ENCODE measurements at regions of chr6 and their contacts with region 1.

Region 1: DNA sequence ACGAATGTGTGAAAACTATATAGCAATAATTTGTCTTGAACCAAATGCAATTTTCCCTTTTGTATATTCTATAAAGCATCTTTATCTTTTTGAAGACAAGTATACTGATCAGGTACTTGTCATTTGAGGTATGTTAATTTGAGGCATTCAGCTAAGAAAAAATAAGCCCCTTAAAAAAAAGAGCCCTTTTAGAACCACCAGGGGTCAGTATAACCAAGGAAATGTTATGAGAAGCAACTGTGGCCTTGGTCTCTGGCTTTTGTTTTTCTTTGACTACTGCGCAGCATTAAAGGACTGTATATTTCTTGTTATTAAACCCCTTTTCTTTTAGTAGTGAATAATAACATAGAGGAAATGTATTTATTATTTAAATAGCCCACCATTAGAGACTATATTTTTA is 43.1 kb downstream of the CD109 start:
- DNase-seq: no peak
- H3K4me3 Mint-ChIP-seq: no peak overlapping the region
- H3K27ac Mint-ChIP-seq: no peak overlapping the region
- H3K4me1 Mint-ChIP-seq: no peaks in the 10 kb centered on the region
- H3K27me3 Mint-ChIP-seq: no peaks in the 10 kb centered on the region

Region 2: GRCh38 chr6:73675466-73676098 is 63.5 kb before region 1 on chr6:
- CTCF ChIA-PET with region 1: interaction called, 185 read pairs
- intact Hi-C with region 1: no loop called
- DNase-seq: peak; percentile 87
- H3K4me3 Mint-ChIP-seq: no peak overlapping the region
- H3K27ac Mint-ChIP-seq: no peak overlapping the region
- H3K4me1 Mint-ChIP-seq: no peaks in the 10 kb centered on the region
- H3K27me3 Mint-ChIP-seq: peaks cover 8% of the 10 kb centered on the region

Region 3: GRCh38 chr6:73768558-73768957 is 29.5 kb after region 1 on chr6:
- CTCF ChIA-PET with region 1: interaction called, 16 read pairs
- intact Hi-C with region 1: no loop called
- DNase-seq: no peak
- H3K4me3 Mint-ChIP-seq: no peak overlapping the region
- H3K27ac Mint-ChIP-seq: no peak overlapping the region
- H3K4me1 Mint-ChIP-seq: no peaks in the 10 kb centered on the region
- H3K27me3 Mint-ChIP-seq: no peaks in the 10 kb centered on the region

Region 4: DNA sequence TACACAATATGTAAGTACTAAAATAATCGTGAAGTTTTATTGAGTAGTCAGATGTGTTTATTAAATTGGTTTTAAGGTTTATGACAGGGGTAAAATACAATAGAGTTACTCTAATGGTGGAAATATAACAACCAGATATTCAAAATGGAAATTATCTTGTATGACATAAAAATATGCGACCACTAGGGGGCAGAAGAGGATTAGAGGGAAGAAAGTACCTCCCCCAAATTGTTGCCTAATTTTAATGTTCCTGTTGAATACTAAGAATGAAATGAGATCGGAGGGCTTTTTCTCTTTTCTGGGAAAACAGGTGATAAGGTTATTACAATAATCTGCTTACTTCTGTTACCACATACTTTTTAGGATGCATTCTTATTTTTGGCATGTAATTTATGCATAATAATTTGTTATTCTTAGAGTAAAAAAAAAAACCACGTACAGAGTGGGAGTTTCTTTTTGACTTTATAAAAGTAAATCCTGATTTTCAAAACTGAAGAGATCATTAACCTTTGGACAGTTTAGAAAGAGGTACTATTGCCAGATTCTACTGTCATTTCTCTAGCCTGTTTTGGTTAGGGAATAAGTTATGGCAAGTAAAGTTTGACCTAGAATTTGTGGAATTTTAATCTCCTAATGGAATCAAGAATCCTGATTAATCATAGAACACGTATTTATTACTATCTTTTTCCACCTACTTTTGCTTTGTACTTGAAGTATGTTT is 116.1 kb after region 1 on chr6:
- CTCF ChIA-PET with region 1: interaction called, 4 read pairs
- intact Hi-C with region 1: loop called (anchors 1 kb)
- DNase-seq: peak; percentile 6
- H3K4me3 Mint-ChIP-seq: no peak overlapping the region
- H3K27ac Mint-ChIP-seq: no peak overlapping the region
- H3K4me1 Mint-ChIP-seq: no peaks in the 10 kb centered on the region
- H3K27me3 Mint-ChIP-seq: no peaks in the 10 kb centered on the region

Region 5: DNA sequence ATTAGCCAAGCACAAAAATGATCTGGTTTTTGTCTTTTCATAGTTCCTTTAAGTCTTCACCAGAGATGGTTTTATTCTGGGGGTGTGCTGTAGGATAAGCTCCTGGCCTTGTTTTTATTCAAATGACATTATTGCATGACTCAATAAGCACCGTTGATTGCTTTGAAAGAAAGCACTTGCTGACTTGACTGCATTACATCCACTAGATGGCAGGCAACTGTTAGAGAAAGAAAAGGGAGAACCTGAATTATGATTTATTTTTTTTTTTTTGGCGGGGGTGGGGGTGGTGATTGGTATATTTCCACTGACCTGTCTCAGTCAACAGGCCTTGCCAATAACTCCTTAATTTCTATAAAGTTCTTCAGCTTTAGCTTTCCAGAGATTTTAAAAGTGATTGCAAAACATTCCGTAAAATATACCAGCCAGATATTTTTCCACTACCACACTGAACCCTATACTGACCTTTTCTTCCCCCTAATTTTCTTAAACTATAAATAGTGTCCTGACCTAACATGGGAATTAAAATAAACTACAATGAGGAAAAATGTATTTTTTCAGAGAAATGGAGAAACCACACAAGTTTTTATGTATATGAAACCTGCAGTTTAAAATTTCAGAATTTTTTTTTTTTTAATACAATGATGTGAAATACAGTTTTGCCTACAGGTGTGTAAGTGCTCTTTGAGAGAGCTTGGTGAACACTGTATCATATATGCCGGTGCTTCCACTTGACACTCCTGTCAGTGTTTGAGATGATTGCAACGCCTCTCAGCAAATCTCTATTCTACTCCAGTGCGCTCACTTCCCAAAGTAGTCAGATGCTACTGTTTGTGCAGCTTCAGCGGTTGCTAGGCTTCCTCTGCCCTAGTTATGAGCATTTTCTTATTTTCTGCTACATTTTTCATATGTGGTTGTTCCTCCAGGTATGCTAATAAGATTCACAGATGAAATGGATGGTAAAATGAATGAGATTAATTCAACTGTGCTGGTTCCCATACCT is 231.2 kb after region 1 on chr6:
- CTCF ChIA-PET with region 1: no interaction called
- intact Hi-C with region 1: loop called (anchors 1 kb)
- DNase-seq: peak; percentile 9
- H3K4me3 Mint-ChIP-seq: no peak overlapping the region
- H3K27ac Mint-ChIP-seq: no peak overlapping the region
- H3K4me1 Mint-ChIP-seq: no peaks in the 10 kb centered on the region
- H3K27me3 Mint-ChIP-seq: no peaks in the 10 kb centered on the region

Region 6: GRCh38 chr6:74574794-74575193 is 835.7 kb after region 1 on chr6:
- CTCF ChIA-PET with region 1: no interaction called
- intact Hi-C with region 1: loop called (anchors 2 kb)
- DNase-seq: no peak
- H3K4me3 Mint-ChIP-seq: no peak overlapping the region
- H3K27ac Mint-ChIP-seq: no peak overlapping the region
- H3K4me1 Mint-ChIP-seq: no peaks in the 10 kb centered on the region
- H3K27me3 Mint-ChIP-seq: no peaks in the 10 kb centered on the region

Measured in activated naive CD4-positive, alpha-beta T cell treated with anti-CD3 and anti-CD28 coated beads for 36 hours (primary cell).